Psoas muscle (tissue), 8 donors: ENCODE measurements at regions of chr15 and their contacts with region 1.

Region 1: GRCh38 chr15:25763331-25763751 is 99.8 kb downstream of the ATP10A start:
- DNase-seq: no peak
- ATAC-seq: no peak
- H3K4me3 ChIP-seq: no peak overlapping the region
- H3K27ac ChIP-seq: no peak overlapping the region
- H3K4me1 ChIP-seq: peaks cover 5% of the 10 kb centered on the region
- H3K27me3 ChIP-seq: no peaks in the 10 kb centered on the region
- CTCF ChIP-seq: no peak

Region 2: GRCh38 chr15:25710184-25710583 is 53.2 kb before region 1 on chr15:
- intact Hi-C with region 1: no loop called
- DNase-seq: peak; percentile 60 to 73
- ATAC-seq: peak; percentile 67 to 84 (median 82)
- H3K4me3 ChIP-seq: no peak overlapping the region
- H3K27ac ChIP-seq: no peak overlapping the region
- H3K4me1 ChIP-seq: no peaks in the 10 kb centered on the region
- H3K27me3 ChIP-seq: no peaks in the 10 kb centered on the region
- CTCF ChIP-seq: peak; percentile 65

Region 3: DNA sequence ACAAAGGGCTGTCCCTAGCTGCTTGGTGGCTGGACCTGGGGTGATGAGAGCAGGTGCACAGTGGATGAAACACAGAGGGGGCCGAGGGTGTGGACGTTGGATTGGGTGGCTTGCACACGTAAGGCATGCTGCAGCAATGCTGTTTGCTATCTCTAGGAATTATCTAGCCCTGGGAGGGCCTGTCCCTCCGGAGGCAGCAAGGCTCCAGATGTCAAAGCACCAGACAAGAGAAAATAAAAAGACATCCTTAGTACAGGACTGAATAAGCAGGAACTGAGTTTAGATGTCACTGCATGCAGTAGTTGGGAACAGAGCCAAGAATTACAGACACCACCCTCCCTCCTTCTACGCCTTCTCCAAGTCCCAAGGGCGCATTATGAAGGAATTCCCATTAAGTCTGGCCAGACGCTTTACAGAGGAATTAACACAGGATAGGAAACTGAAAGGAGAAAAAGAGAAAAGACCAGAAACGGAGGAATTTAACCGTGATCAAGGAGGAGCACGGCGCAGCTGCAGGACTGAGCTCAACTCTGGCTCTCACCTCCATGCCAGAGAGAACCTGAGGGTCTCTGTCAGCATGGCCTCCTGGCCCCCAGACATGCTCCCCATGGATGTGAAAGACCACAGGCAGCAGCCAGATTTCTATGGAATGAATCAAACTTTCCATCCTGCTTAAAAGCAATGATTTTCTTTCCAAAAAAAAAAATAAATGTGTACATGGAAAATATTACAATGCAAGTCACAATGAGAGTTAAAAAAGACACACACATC is 86.0 kb after region 1 on chr15:
- intact Hi-C with region 1: loop called in 1 of 2 experiments (anchors 10 kb)
- DNase-seq: no peak
- ATAC-seq: peak in 1 of 4 donors; percentile 26
- H3K4me3 ChIP-seq: peak overlapping the region; percentile 59
- H3K27ac ChIP-seq: no peak overlapping the region
- H3K4me1 ChIP-seq: peaks cover 7% of the 10 kb centered on the region
- H3K27me3 ChIP-seq: no peaks in the 10 kb centered on the region
- CTCF ChIP-seq: no peak